ENCODE measurements at regions of chr15 and their contacts with region 1.

Region 1: GRCh38 chr15:74382004-74382816 is 14.8 kb upstream of the CYP11A1 start:
- DNase-seq: peak; percentile 62 to 96 (median 84)
- ATAC-seq: peak; percentile 89 to 97 (median 95)
- H3K4me3 ChIP-seq: no peak overlapping the region
- H3K27ac ChIP-seq: no peak overlapping the region
- H3K4me1 ChIP-seq: no peaks in the 10 kb centered on the region
- H3K27me3 ChIP-seq: no peaks in the 10 kb centered on the region
- CTCF ChIP-seq: peak; percentile 83 to 94 (median 94)

Region 2: GRCh38 chr15:74438721-74439316 is 56.6 kb after region 1 on chr15:
- intact Hi-C with region 1: loop called in 2 of 3 experiments (anchors 5 kb)
- DNase-seq: peak in 5 of 6 donors; percentile 32 to 80 (median 70)
- ATAC-seq: peak; percentile 73 to 85 (median 82)
- H3K4me3 ChIP-seq: no peak overlapping the region
- H3K27ac ChIP-seq: no peak overlapping the region
- H3K4me1 ChIP-seq: peaks cover 0 to 4% (median 0%) of the 10 kb centered on the region in 3 donors
- H3K27me3 ChIP-seq: no peaks in the 10 kb centered on the region
- CTCF ChIP-seq: peak; percentile 72 to 91 (median 84)

Region 3: DNA sequence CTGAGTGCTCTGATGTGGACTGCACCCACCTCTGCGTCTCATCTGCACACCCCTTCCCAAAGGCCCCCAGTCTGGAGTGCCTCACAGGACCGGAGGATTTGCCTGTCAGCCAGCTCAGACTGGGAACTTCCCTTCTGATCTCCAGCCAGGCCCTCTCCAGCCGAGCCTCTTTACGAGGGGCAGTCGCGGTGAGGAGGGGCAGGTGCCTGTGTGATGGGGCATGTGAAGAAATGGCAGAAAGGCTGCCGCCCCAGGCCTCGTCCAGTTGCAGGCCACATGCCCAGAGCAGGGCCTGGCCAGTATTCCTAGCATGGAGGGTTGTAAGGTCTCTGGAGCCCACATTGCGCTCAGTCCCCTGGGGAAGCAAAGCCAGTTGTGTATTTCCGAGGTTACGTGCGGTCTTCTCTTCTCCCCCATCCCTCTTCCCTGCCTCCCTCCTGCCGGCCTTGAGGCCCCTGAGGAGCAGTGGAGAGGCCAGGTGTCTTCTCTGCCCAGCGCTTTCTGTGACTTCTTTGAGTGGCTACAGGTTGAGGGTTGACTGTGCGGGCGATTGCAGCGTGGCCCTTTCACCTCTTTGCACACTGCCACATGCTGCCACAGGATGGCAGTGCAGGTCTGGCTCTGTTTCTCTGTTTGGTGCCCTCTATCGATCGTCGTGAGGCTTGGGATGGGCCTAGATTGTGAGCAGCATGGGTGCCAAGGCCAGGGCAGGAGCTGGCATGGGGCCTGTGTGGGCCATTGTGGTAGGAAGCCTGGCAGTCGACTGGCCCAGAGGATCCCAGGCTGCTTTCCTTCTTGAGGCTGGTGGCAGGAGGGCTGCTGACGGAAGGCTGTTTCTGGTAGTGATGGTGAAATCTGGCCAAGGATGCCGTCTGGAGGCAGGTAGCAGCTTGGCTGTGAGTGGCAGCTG is 238.7 kb after region 1 on chr15:
- intact Hi-C with region 1: loop called in 2 of 3 experiments (anchors 10 kb)
- DNase-seq: peak in 5 of 6 donors; percentile 51 to 82 (median 71)
- ATAC-seq: peak; percentile 29 to 80 (median 74)
- H3K4me3 ChIP-seq: no peak overlapping the region
- H3K27ac ChIP-seq: no peak overlapping the region
- H3K4me1 ChIP-seq: peaks cover 12 to 15% (median 13%) of the 10 kb centered on the region in 3 donors
- H3K27me3 ChIP-seq: no peaks in the 10 kb centered on the region
- CTCF ChIP-seq: peak; percentile 32 to 66 (median 40)

Region 4: GRCh38 chr15:74716644-74717043 is 334.4 kb after region 1 on chr15:
- intact Hi-C with region 1: no loop called
- DNase-seq: no peak
- ATAC-seq: no peak
- H3K4me3 ChIP-seq: no peak overlapping the region
- H3K27ac ChIP-seq: no peak overlapping the region
- H3K4me1 ChIP-seq: no peaks in the 10 kb centered on the region
- H3K27me3 ChIP-seq: no peaks in the 10 kb centered on the region
- CTCF ChIP-seq: no peak

Region 5: GRCh38 chr15:74752491-74753020 is 370.3 kb after region 1 on chr15:
- intact Hi-C with region 1: loop called in 1 of 3 experiments (anchors 10 kb)
- DNase-seq: no peak
- ATAC-seq: no peak
- H3K4me3 ChIP-seq: no peak overlapping the region
- H3K27ac ChIP-seq: no peak overlapping the region
- H3K4me1 ChIP-seq: no peaks in the 10 kb centered on the region
- H3K27me3 ChIP-seq: no peaks in the 10 kb centered on the region
- CTCF ChIP-seq: no peak

Measured in pancreas (tissue), 10 donors.